MCF 10A (cell line): ENCODE measurements at regions of chr12 and their contacts with region 1.

Region 1: DNA sequence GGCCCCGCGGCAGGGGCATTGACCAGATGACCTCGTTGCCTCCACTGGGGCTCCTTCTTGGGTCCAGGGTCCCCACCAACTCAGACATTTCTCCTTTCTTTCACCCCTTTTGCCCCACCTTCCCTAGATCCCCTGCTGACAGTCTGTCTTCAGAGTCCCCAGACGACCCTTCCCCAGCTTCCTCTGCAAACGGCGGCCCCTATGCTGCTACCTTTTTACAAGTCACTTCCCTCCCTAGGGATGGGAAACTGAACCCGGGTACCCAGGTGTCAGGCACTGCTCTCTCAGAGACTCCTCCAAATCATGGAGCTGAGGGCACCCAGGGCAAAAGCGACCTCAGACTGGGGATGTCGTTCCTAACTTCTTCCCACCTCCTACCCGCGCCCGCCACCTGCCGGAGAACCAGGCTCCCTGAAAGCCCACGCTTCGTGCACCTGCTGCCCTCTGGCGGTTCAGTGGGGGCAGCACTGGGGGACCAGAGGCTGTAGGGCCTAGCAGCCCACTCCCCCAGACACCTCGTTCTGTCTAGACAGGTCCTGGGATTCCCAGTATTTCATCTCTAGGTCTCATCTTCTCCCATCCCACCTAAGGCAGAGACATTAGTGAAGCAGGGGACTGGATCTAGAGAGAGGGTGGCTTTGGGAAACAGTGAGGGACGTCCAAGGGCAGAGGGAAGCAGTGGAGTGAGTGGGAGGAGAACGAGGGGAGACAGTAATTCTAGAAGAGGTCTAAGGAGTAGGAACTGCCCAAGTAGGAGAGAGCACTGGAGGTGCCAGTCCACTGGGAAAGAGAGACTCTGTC is 4.9 kb downstream of the ZNF385A start:
- DNase-seq: peak; percentile 92
- H3K4me3 Mint-ChIP-seq: peak overlapping the region; percentile 74
- H3K27ac Mint-ChIP-seq: peak overlapping the region; percentile 49
- H3K4me1 Mint-ChIP-seq: peaks cover 37% of the 10 kb centered on the region
- H3K27me3 Mint-ChIP-seq: no peaks in the 10 kb centered on the region
- CTCF ChIP-seq: peak; percentile 99

Region 2: DNA sequence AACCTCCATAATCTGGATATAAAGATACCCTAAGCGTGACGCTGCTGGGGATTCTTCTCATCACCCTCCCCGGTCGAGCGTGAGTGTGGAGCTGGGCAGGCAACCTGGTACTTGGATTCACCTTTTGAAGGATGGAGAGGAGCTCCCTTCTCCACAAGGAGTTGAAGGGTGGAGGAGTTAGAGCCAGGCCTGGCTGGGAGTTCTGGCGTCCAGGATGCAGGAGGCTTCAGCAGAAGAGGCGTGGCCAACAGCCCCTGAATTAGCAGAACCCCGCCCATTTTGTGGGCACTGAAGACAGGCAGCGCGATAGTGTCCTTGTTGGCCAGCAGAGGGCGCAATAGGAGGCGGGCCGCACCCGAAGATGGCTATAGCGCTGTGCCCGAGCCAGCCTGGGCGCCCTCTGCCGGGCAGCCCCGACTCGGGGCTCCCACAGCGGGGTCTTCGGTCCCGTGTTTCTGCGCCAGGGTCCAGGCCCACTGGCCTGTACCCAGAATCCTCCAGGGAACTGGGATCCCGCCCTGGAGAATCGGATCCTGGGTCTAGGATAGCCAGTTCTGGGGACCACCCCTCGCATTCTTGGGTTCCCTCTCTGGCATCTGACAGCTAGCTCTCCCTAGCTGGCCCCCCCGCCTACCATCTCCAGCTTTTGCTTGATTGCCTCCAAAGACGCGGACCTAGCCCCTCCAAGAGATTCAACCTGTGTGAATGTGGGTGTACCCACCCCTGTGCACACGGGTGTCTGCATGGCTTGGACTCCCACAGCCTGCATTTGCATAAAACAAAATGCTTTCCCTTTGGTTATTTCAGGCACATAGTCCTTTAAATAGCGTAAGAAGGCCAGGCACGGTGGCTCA is 164.8 kb before region 1 on chr12:
- CTCF ChIA-PET with region 1: interaction called, 18 read pairs
- POLR2A ChIA-PET with region 1: no interaction called
- intact Hi-C with region 1: no loop called
- DNase-seq: peak; percentile 93
- H3K4me3 Mint-ChIP-seq: peak overlapping the region; percentile 26
- H3K27ac Mint-ChIP-seq: no peak overlapping the region
- H3K4me1 Mint-ChIP-seq: peaks cover 12% of the 10 kb centered on the region
- H3K27me3 Mint-ChIP-seq: no peaks in the 10 kb centered on the region
- CTCF ChIP-seq: peak; percentile 99

Region 3: GRCh38 chr12:54294152-54294952 is 85.2 kb before region 1 on chr12:
- CTCF ChIA-PET with region 1: interaction called, 12 read pairs
- POLR2A ChIA-PET with region 1: no interaction called
- intact Hi-C with region 1: no loop called
- DNase-seq: peak; percentile 63
- H3K4me3 Mint-ChIP-seq: no peak overlapping the region
- H3K27ac Mint-ChIP-seq: no peak overlapping the region
- H3K4me1 Mint-ChIP-seq: peaks cover 7% of the 10 kb centered on the region
- H3K27me3 Mint-ChIP-seq: no peaks in the 10 kb centered on the region
- CTCF ChIP-seq: peak; percentile 81

Region 4: GRCh38 chr12:54311051-54311450 is 68.5 kb before region 1 on chr12:
- CTCF ChIA-PET with region 1: no interaction called
- POLR2A ChIA-PET with region 1: no interaction called
- intact Hi-C with region 1: no loop called
- DNase-seq: no peak
- H3K4me3 Mint-ChIP-seq: no peak overlapping the region
- H3K27ac Mint-ChIP-seq: no peak overlapping the region
- H3K4me1 Mint-ChIP-seq: peaks cover 11% of the 10 kb centered on the region
- H3K27me3 Mint-ChIP-seq: no peaks in the 10 kb centered on the region
- CTCF ChIP-seq: no peak

Region 5: DNA sequence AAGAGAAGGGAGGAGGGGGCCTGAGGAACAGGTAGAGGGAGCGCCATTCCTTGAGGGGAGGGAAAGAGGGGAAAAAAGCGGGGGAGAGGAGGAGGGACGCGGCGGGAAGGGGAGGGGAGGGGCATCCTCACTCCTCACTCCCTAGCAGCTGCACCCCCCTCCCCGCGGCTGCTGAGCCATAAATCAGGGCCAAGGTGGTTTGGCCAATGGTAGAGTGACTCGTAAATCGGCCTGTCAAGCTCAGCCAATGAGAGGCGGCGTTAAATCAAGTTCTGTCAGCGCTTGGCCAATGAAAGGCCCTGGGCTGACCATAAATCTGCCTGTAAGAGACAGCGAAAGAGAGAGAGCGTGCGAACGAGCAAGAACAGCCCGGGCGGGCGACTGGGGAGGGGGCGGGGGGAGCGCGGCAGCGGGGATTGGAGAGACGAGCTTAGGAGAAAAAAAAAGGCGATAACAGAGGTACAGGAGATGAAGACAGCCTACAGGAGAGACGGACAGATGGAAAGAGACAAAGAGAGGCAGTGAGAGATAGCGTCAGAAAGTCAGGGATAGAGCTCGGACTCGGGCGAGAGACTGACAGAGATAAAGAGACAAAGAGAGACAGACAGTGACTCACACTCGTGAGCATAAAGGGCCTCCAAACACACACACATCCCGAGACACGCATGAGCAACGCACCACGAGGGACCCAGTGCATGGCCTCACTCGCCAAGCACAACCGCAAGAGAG is 20.4 kb before region 1 on chr12:
- CTCF ChIA-PET with region 1: interaction called, 38 read pairs
- POLR2A ChIA-PET with region 1: interaction called, 3 read pairs
- intact Hi-C with region 1: no loop called
- DNase-seq: peak; percentile 99
- H3K4me3 Mint-ChIP-seq: no peak overlapping the region
- H3K27ac Mint-ChIP-seq: no peak overlapping the region
- H3K4me1 Mint-ChIP-seq: peaks cover 23% of the 10 kb centered on the region
- H3K27me3 Mint-ChIP-seq: no peaks in the 10 kb centered on the region
- CTCF ChIP-seq: no peak

Region 6: GRCh38 chr12:54411391-54412241 is 32.0 kb after region 1 on chr12:
- CTCF ChIA-PET with region 1: interaction called, 13 read pairs
- POLR2A ChIA-PET with region 1: interaction called, 3 read pairs
- intact Hi-C with region 1: no loop called
- DNase-seq: peak; percentile 96
- H3K4me3 Mint-ChIP-seq: peak overlapping the region; percentile 2
- H3K27ac Mint-ChIP-seq: peak overlapping the region; percentile 94
- H3K4me1 Mint-ChIP-seq: peaks cover 40% of the 10 kb centered on the region
- H3K27me3 Mint-ChIP-seq: no peaks in the 10 kb centered on the region
- CTCF ChIP-seq: no peak

Region 7: GRCh38 chr12:54439521-54440255 is 60.1 kb after region 1 on chr12:
- CTCF ChIA-PET with region 1: interaction called, 30 read pairs
- POLR2A ChIA-PET with region 1: interaction called, 4 read pairs
- intact Hi-C with region 1: no loop called
- DNase-seq: peak; percentile 73
- H3K4me3 Mint-ChIP-seq: no peak overlapping the region
- H3K27ac Mint-ChIP-seq: peak overlapping the region; percentile 22
- H3K4me1 Mint-ChIP-seq: peaks cover 13% of the 10 kb centered on the region
- H3K27me3 Mint-ChIP-seq: no peaks in the 10 kb centered on the region
- CTCF ChIP-seq: peak; percentile 91

Region 8: DNA sequence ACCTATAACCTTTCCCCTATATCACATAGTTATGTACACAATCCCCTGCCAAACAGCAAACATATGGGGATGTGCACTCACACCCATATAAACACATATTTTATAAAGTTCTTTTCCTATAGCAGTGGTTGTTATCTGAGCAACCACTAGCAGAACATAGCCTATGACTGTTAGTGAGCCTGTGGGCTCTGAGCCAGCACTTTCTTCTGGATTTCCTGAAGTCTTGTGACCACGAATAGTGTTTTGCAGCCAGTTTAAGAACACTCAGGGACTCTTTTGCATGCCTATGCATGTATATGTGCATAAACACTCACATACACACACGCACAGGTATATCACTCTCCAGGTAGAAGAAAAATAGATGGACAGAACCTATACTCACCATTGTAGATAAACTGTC is 587.9 kb after region 1 on chr12:
- CTCF ChIA-PET with region 1: no interaction called
- POLR2A ChIA-PET with region 1: no interaction called
- intact Hi-C with region 1: no loop called
- DNase-seq: peak; percentile 25
- H3K4me3 Mint-ChIP-seq: no peak overlapping the region
- H3K27ac Mint-ChIP-seq: no peak overlapping the region
- H3K4me1 Mint-ChIP-seq: no peaks in the 10 kb centered on the region
- H3K27me3 Mint-ChIP-seq: peaks cover 78% of the 10 kb centered on the region
- CTCF ChIP-seq: no peak